ENCODE measurements at regions of chr12 and their contacts with region 1.

Region 1: GRCh38 chr12:66693901-66694675 is 15.2 kb upstream of the GRIP1 start:
- DNase-seq: peak in 1 of 2 donors; percentile 11
- H3K4me3 ChIP-seq: no peak overlapping the region
- H3K27ac ChIP-seq: no peak overlapping the region
- H3K4me1 ChIP-seq: no peaks in the 10 kb centered on the region
- H3K27me3 ChIP-seq: no peaks in the 10 kb centered on the region
- CTCF ChIP-seq: peak in 4 of 6 experiments; percentile 33 to 62 (median 56)
- POLR2A ChIP-seq: no peak

Region 2: DNA sequence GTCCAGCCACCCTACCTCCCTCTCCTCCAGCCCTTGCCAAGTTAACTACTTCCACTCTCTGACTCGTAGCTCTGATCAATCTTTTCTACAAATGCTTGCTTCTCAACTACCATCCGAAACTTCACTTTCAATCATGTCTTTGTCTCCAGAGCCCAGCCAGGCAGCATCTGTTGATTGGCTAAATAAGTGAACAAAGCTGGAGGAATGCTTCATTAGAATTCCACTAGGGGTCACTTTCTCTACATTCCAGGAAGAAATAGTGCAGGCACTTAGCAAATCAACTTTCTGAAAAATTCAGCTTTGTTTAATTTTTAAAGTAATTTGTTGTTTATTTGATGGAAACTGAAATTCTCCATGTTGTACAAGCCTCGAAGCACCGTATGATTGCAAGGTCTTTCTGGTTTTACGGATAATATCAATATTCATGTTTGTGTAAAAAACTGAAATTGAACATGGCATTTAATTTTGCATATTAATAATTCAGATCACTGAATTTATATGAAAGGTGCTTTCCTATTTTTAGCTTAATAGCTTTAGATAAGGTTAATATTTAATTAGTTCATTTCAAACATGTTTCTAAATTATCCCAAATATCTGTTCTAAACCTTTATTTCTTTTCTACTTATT is 424.2 kb before region 1 on chr12:
- intact Hi-C with region 1: loop called (anchors 10 kb)
- DNase-seq: no peak
- H3K4me3 ChIP-seq: no peak overlapping the region
- H3K27ac ChIP-seq: no peak overlapping the region
- H3K4me1 ChIP-seq: no peaks in the 10 kb centered on the region
- H3K27me3 ChIP-seq: no peaks in the 10 kb centered on the region
- CTCF ChIP-seq: peak in 4 of 6 experiments; percentile 41 to 71 (median 55)
- POLR2A ChIP-seq: no peak

Region 3: GRCh38 chr12:66388517-66388916 is 305.6 kb before region 1 on chr12:
- intact Hi-C with region 1: no loop called
- DNase-seq: no peak
- H3K4me3 ChIP-seq: no peak overlapping the region
- H3K27ac ChIP-seq: no peak overlapping the region
- H3K4me1 ChIP-seq: no peaks in the 10 kb centered on the region
- H3K27me3 ChIP-seq: no peaks in the 10 kb centered on the region
- CTCF ChIP-seq: no peak
- POLR2A ChIP-seq: no peak

Region 4: GRCh38 chr12:66768293-66768692 is 74.2 kb after region 1 on chr12:
- intact Hi-C with region 1: no loop called
- DNase-seq: no peak
- H3K4me3 ChIP-seq: no peak overlapping the region
- H3K27ac ChIP-seq: no peak overlapping the region
- H3K4me1 ChIP-seq: no peaks in the 10 kb centered on the region
- H3K27me3 ChIP-seq: no peaks in the 10 kb centered on the region
- CTCF ChIP-seq: no peak
- POLR2A ChIP-seq: no peak

Measured in thyroid gland (tissue), 4 donors.